Thyroid gland (tissue), 4 donors: ENCODE measurements at regions of chr1 and their contacts with region 1.

Region 1: DNA sequence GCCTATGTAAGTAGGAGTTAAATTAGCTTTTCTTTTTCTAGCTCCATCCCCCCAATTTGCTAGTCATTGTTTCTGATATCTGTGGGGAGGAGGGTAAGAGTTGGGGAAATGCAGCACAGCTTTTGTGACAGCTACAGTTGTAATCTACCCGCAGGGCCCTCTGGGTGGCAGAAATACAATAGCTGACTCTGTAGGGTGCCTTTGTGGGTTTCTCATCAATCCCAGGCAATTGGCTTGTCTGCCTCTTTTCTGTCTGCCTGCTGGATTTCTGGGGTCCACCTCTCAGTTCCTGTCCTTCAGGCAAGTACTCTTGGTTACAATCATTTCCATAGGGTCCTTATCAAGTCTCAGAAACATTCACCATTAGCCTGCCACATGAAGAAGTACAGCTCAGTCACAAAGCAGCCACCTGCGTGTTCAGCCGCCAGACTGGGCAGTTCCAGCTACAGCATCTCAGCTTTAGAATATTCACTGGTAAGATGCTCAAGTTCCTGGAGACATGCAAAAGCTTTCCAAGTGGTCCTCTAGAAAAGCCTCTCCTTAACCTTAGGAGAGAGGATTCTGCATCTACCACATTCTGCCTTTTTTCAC is 19.2 kb upstream of the SLC44A5 start:
- DNase-seq: no peak
- H3K4me3 ChIP-seq: no peak overlapping the region
- H3K27ac ChIP-seq: no peak overlapping the region
- H3K4me1 ChIP-seq: no peaks in the 10 kb centered on the region
- H3K27me3 ChIP-seq: no peaks in the 10 kb centered on the region
- CTCF ChIP-seq: no peak
- POLR2A ChIP-seq: no peak

Region 2: DNA sequence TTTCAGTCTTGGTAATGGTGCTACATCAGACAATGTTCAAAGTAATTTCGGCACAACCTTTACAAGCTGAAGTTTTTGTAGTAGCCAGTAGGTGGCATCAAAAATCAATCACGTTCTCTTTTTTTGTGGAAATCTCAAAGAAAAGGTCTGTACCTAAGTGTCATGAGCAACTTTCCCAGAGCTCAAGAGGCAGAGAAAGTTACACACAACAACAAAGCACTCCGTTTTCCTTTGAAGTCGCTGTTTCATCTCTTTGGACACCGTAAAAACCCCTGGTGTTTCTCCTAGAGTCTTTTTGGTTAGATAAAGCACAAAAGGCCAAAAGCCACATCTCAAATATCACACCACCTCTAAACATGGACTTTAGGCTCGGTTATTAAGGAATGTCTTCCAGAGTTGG is 364.3 kb before region 1 on chr1:
- intact Hi-C with region 1: loop called (anchors 2 kb)
- DNase-seq: no peak
- H3K4me3 ChIP-seq: no peak overlapping the region
- H3K27ac ChIP-seq: no peak overlapping the region
- H3K4me1 ChIP-seq: no peaks in the 10 kb centered on the region
- H3K27me3 ChIP-seq: no peaks in the 10 kb centered on the region
- CTCF ChIP-seq: peak; percentile 30 to 74 (median 52)
- POLR2A ChIP-seq: no peak

Region 3: GRCh38 chr1:75548721-75549480 is 81.2 kb before region 1 on chr1:
- intact Hi-C with region 1: no loop called
- DNase-seq: no peak
- H3K4me3 ChIP-seq: no peak overlapping the region
- H3K27ac ChIP-seq: no peak overlapping the region
- H3K4me1 ChIP-seq: no peaks in the 10 kb centered on the region
- H3K27me3 ChIP-seq: no peaks in the 10 kb centered on the region
- CTCF ChIP-seq: no peak
- POLR2A ChIP-seq: no peak